Adrenal gland (tissue), 19 donors: ENCODE measurements at regions of chr1 and their contacts with region 1.

Region 1: DNA sequence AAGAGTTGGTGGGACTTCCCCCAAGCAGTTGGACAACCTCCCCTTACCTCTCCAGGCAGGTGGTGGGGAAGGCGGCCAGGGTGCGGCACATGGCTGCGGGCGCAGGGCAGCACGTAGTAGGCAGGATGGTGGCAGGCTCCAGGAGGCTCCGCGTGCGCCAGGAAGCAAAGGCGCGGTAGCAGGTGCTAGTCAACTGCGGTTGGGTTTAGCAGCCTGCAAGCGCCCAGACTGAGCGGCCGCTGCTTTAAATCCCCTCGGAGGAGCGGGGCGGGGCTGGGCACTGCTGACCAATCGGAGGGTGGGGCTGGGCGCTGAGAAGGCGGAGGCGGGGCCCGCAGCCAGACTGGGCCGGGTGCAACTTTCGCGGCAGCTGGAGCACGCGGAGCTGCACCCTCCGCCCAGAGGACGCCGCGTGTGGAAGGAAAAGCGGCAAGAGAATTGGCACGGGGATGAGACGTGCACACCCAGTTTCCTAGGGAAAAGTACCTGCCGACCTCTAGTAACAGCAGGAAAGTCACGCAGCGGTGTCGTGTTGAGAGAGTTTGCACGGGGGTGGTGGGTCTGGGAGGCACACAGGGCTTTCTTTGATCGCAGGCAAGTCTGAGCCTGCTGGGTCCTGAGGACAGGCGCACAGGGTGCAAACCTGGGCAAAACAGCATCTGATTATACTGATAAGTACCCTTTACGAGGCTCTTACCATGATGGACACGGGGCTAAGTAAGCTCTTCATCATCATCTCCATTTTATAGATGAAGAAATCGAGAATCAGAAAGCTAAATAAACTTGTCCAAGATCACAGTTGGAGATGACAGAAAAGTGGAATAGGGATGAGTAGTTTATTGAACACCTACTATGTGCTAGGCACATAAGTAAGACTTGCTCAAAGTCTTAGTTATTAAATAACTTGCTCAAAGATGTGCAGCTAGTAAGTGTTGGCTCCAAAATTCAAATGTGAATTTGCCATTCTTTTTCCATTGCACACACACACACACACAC is at the start of gene RGS16:
- DNase-seq: peak; percentile 92 to 96 (median 93)
- H3K4me3 ChIP-seq: peak within 1 kb of the TSS in 1 of 4 donors; percentile 53
- H3K27ac ChIP-seq: peak within 1 kb of the TSS in 2 of 5 donors; percentile 22 to 57
- H3K4me1 ChIP-seq: peaks cover 0 to 27% of the 10 kb centered on the region in 2 donors
- H3K27me3 ChIP-seq: no peaks in the 10 kb centered on the region
- CTCF ChIP-seq: no peak
- POLR2A ChIP-seq: peak; percentile 69 to 79
- total RNA-seq, gene RGS16: 0.36 to 7.8 (median 3.2) TPM

Region 2: GRCh38 chr1:182520736-182521135 is 83.7 kb before region 1 on chr1:
- intact Hi-C with region 1: no loop called
- DNase-seq: no peak
- H3K4me3 ChIP-seq: no peak overlapping the region
- H3K27ac ChIP-seq: no peak overlapping the region
- H3K4me1 ChIP-seq: no peaks in the 10 kb centered on the region
- H3K27me3 ChIP-seq: peaks cover 3% of the 10 kb centered on the region
- CTCF ChIP-seq: no peak
- POLR2A ChIP-seq: no peak

Region 3: DNA sequence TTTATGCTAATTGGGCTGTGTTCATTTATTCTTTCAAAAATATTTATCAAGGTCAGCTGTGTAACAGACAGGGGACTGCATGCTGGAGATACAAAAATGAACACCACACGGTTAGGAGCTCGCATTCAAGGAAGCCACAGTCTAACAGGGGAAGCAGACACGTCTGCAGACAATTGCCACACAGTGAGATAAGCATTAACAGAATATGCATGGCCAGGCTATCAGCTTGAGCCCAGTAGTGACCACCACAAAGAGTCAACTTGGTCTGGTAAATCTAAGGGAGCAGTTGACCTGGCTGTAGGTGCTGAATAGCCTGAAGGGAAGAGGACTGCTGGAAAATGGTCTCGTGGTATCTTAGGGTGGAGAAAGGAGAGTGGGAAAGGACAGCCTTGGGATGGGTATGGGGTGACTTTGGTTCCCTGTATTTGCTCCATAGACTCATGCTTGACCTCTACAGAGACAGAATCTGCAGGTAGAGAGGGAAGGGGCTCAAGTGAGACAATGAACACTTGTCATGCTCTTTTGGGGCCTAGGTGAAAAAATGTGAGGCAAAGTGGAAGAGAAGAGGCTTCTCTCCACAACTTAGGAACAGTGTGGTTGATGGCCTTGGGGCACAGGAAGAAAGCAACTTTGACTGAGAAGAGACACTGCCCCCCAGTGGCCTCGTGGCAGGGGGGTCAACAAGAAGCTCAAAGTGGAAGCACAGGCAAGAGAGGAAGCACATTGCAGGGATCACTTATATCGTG is 177.5 kb after region 1 on chr1:
- intact Hi-C with region 1: loop called (anchors 2 kb)
- DNase-seq: peak; percentile 73 to 88 (median 78)
- H3K4me3 ChIP-seq: no peak overlapping the region
- H3K27ac ChIP-seq: no peak overlapping the region
- H3K4me1 ChIP-seq: no peaks in the 10 kb centered on the region
- H3K27me3 ChIP-seq: no peaks in the 10 kb centered on the region
- CTCF ChIP-seq: peak; percentile 36 to 78 (median 67)
- POLR2A ChIP-seq: no peak